Mammary epithelial cell (primary cell): ENCODE measurements at regions of chr22 and their contacts with region 1.

Region 1: GRCh38 chr22:40525249-40525884 is 111.2 kb downstream of the MRTFA start:
- DNase-seq: peak; percentile 20
- H3K4me3 ChIP-seq: no peak overlapping the region
- H3K27ac ChIP-seq: no peak overlapping the region
- H3K4me1 ChIP-seq: peaks cover 5% of the 10 kb centered on the region
- H3K27me3 ChIP-seq: no peaks in the 10 kb centered on the region
- CTCF ChIP-seq: peak; percentile 63 to 70

Region 2: GRCh38 chr22:40541300-40541699 is 15.9 kb after region 1 on chr22:
- CTCF ChIA-PET with region 1: interaction called, 17 read pairs
- dilution Hi-C with region 1: no loop called
- in situ Hi-C with region 1: no loop called
- intact Hi-C with region 1: no loop called
- DNase-seq: peak; percentile 99
- H3K4me3 ChIP-seq: no peak overlapping the region
- H3K27ac ChIP-seq: peak overlapping the region; percentile 81
- H3K4me1 ChIP-seq: peaks cover 30% of the 10 kb centered on the region
- H3K27me3 ChIP-seq: no peaks in the 10 kb centered on the region
- CTCF ChIP-seq: no peak

Region 3: DNA sequence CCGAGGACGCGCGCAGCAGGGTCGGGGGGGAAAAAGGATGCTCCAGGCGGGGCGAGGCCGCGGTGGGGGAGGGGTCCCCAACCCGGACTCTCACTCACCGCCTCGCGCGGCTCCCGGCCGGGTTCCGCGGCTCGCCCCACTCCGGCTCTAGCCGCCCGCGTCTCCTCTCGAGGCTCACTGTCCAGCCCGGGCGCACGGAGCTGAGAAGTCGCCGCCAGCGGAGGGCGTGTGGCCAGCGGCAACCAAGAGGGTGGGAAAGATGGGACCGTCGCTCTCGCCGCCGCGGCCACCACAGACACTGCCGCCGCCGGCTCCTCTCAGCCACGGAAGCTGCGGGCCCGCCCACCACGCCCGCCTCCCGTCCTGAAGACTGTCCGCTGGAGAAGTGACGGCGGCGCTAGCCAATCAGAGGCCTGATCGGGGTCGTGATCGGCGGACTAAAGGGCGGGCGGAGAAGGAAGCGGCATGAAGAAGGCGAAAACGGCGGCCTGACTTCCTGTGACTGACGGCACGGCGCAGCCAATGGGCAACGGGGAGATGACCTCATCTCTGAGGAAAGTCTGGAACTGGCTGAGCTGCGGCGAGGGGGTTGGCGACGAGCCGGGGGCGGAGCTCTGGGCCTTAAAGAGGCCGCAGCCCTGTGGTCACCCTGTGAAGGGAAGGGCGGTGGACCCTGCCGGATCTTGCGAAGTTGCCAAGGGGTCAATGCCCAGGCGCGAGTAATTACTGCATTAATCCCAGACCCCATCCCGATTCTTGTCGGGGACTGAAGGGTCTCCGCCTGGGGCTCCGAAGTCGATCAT is 111.2 kb after region 1 on chr22 and contains the start of gene MRTFA:
- CTCF ChIA-PET with region 1: interaction called, 3 read pairs
- dilution Hi-C with region 1: loop called (anchors 5 kb)
- in situ Hi-C with region 1: loop called in 1 of 2 experiments (anchors 5 kb)
- intact Hi-C with region 1: loop called (anchors 2 kb)
- DNase-seq: peak; percentile 100
- H3K4me3 ChIP-seq: peak within 1 kb of the TSS; percentile 85 to 100 (median 90)
- H3K27ac ChIP-seq: peak within 1 kb of the TSS; percentile 80
- H3K4me1 ChIP-seq: peaks cover 20% of the 10 kb centered on the region
- H3K27me3 ChIP-seq: no peaks in the 10 kb centered on the region
- CTCF ChIP-seq: no peak
- total RNA-seq, gene MRTFA: 51.0 to 75.7 TPM

Region 4: GRCh38 chr22:40679964-40680818 is 154.8 kb after region 1 on chr22:
- CTCF ChIA-PET with region 1: no interaction called
- dilution Hi-C with region 1: no loop called
- in situ Hi-C with region 1: no loop called
- intact Hi-C with region 1: loop called (anchors 1 kb)
- DNase-seq: no peak
- H3K4me3 ChIP-seq: no peak overlapping the region
- H3K27ac ChIP-seq: no peak overlapping the region
- H3K4me1 ChIP-seq: peaks cover 27% of the 10 kb centered on the region
- H3K27me3 ChIP-seq: no peaks in the 10 kb centered on the region
- CTCF ChIP-seq: peak in 1 of 2 donors; percentile 10

Region 5: DNA sequence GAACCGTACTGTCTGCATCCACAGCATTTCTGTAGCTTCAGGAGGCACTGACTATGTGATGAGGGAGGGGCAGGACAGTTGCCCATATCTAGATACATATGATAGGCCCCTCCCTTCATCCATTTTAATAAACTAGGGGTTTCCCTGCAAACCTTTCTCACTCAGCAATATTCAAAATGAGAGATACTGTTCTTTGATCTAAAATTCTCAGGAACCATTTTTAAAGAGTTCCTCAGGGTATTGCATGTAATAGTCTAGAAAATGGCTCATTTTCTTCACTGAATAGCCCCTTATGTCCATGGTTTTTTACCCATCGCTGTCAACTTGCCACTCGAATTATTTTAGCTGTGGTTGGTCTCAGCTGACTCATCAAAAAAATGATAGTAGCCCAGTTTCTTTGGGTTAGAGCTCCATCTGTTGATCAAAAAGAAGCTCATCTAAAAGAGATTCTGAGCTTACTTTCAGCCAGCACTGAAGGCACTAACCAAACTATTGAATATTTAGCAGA is 373.5 kb after region 1 on chr22:
- CTCF ChIA-PET with region 1: interaction called, 3 read pairs
- dilution Hi-C with region 1: no loop called
- in situ Hi-C with region 1: no loop called
- intact Hi-C with region 1: loop called (anchors 5 kb)
- DNase-seq: peak; percentile 52
- H3K4me3 ChIP-seq: no peak overlapping the region
- H3K27ac ChIP-seq: no peak overlapping the region
- H3K4me1 ChIP-seq: peaks cover 2% of the 10 kb centered on the region
- H3K27me3 ChIP-seq: no peaks in the 10 kb centered on the region
- CTCF ChIP-seq: peak; percentile 56 to 59